B cell (primary cell): ENCODE measurements at regions of chr9 and their contacts with region 1.

Region 1: DNA sequence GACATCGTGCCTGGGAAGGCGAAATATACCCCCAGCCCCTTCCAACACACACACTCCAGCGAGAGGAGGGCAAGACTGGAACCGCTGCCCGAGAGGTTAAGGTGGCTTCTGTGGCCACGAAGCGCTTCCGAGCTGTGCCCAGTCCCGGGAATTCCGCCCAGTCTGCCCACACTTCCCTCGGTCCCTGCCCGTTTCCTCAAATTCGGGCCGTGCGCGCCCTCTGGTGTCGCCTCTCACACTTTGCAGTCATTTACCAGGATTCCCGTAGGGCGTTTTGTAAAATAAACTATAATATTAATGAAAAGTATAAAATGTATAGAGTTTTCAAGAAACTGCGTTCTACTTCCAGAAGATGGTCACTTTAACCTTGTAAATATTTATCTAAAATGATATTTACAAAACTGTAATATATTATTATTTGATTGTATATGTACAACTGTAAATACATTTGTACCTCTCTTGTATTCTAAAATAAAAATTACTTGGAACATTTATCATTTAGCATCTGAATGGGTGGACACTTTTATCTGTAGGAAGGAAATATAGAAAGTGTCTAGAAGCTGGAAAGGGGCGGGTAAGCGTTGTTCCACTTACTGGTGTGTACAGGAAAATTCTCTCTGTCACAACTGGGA is 11.0 kb upstream of the EXOSC2 start:
- DNase-seq: peak; percentile 74
- ATAC-seq: peak; percentile 41
- H3K4me3 ChIP-seq: peak overlapping the region; percentile 11 to 71 (median 61)
- H3K4me3 Mint-ChIP-seq: peak overlapping the region; percentile 97
- H3K27ac ChIP-seq: no peak overlapping the region
- H3K27ac Mint-ChIP-seq: peak overlapping the region; percentile 53
- H3K4me1 ChIP-seq: peaks cover 12% of the 10 kb centered on the region in 2 donors
- H3K4me1 Mint-ChIP-seq: peaks cover 8% of the 10 kb centered on the region
- H3K27me3 ChIP-seq: peaks cover 0 to 36% (median 4%) of the 10 kb centered on the region in 4 experiments
- H3K27me3 Mint-ChIP-seq: peaks cover 10% of the 10 kb centered on the region
- CTCF ChIP-seq: peak; percentile 89

Region 2: DNA sequence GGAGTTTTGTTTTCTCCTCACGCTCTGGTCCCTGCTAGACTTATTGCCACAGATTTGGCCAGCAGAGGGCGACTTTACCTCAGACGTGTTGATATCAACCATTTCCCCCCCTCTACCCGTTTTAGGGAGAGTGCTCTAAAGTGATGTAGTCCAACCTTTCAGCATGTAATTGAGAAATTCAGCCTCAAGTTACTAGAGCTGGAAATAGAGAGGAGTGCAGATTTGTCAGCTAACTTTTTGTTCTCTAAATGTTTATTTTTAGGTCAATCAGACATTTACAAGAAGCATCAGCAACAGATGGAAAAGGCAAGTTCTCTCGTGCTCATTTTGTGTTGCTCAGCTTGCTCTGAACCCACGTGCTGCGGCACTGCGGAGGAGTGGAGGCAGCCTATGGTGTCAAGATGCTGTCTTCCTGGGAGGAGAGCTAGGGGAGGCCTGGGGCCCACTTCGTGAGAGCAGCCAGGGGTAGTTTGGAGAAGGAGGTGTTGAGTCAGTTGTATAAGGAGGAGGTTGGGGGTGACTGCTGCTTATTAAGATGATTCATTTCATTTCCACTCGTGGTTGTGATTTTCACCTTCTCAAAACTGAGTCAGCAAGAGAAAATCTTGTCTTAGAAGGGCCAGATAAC is 575.3 kb before region 1 on chr9:
- CTCF ChIA-PET with region 1: interaction called, 3 read pairs
- POLR2A ChIA-PET with region 1: no interaction called
- intact Hi-C with region 1: loop called (anchors 10 kb)
- DNase-seq: peak; percentile 85
- ATAC-seq: peak; percentile 80
- H3K4me3 ChIP-seq: no peak overlapping the region
- H3K4me3 Mint-ChIP-seq: no peak overlapping the region
- H3K27ac ChIP-seq: no peak overlapping the region
- H3K27ac Mint-ChIP-seq: peak overlapping the region; percentile 42
- H3K4me1 ChIP-seq: no peaks in the 10 kb centered on the region
- H3K4me1 Mint-ChIP-seq: peaks cover 11% of the 10 kb centered on the region
- H3K27me3 ChIP-seq: no peaks in the 10 kb centered on the region
- H3K27me3 Mint-ChIP-seq: no peaks in the 10 kb centered on the region
- CTCF ChIP-seq: peak; percentile 89

Region 3: DNA sequence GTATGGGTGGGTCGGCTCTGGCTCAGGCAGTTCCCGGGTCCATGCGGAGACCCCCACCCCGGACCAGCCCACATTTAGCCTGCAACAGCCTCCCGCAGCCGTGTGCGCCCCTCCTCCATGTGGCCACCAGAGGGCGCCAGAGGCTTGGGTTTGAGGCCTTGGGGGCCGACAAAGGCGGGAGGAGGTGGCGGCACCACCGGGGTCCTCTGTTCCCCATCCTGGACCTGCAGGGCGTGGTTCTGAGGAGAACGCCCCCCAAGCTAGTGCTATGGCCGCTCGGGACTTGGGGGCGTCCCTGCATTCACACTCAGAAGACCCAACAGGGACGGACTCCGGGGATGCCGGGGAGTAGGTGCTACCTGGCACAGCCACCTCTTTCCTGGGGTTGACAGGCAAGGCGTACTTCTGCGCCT is 221.4 kb before region 1 on chr9:
- CTCF ChIA-PET with region 1: interaction called, 43 read pairs
- POLR2A ChIA-PET with region 1: no interaction called
- intact Hi-C with region 1: no loop called
- DNase-seq: peak; percentile 75
- ATAC-seq: peak; percentile 75
- H3K4me3 ChIP-seq: no peak overlapping the region
- H3K4me3 Mint-ChIP-seq: no peak overlapping the region
- H3K27ac ChIP-seq: no peak overlapping the region
- H3K27ac Mint-ChIP-seq: no peak overlapping the region
- H3K4me1 ChIP-seq: peaks cover 0 to 3% of the 10 kb centered on the region in 2 donors
- H3K4me1 Mint-ChIP-seq: no peaks in the 10 kb centered on the region
- H3K27me3 ChIP-seq: peaks cover 0 to 19% (median 5%) of the 10 kb centered on the region in 4 experiments
- H3K27me3 Mint-ChIP-seq: peaks cover 15% of the 10 kb centered on the region
- CTCF ChIP-seq: peak; percentile 91

Region 4: GRCh38 chr9:130578865-130579737 is 103.5 kb before region 1 on chr9 and contains the start of gene FUBP3:
- CTCF ChIA-PET with region 1: no interaction called
- POLR2A ChIA-PET with region 1: no interaction called
- intact Hi-C with region 1: loop called (anchors 2 kb)
- DNase-seq: peak; percentile 90
- ATAC-seq: peak; percentile 87
- H3K4me3 ChIP-seq: peak within 1 kb of the TSS; percentile 72 to 92 (median 85)
- H3K4me3 Mint-ChIP-seq: peak within 1 kb of the TSS; percentile 95
- H3K27ac ChIP-seq: peak within 1 kb of the TSS; percentile 63 to 84
- H3K27ac Mint-ChIP-seq: peak within 1 kb of the TSS; percentile 89
- H3K4me1 ChIP-seq: peaks cover 19 to 20% of the 10 kb centered on the region in 2 donors
- H3K4me1 Mint-ChIP-seq: peaks cover 38% of the 10 kb centered on the region
- H3K27me3 ChIP-seq: no peaks in the 10 kb centered on the region
- H3K27me3 Mint-ChIP-seq: no peaks in the 10 kb centered on the region
- CTCF ChIP-seq: no peak
- total RNA-seq, gene FUBP3: 45.7 and 51.4 TPM in 2 replicates

Region 5: DNA sequence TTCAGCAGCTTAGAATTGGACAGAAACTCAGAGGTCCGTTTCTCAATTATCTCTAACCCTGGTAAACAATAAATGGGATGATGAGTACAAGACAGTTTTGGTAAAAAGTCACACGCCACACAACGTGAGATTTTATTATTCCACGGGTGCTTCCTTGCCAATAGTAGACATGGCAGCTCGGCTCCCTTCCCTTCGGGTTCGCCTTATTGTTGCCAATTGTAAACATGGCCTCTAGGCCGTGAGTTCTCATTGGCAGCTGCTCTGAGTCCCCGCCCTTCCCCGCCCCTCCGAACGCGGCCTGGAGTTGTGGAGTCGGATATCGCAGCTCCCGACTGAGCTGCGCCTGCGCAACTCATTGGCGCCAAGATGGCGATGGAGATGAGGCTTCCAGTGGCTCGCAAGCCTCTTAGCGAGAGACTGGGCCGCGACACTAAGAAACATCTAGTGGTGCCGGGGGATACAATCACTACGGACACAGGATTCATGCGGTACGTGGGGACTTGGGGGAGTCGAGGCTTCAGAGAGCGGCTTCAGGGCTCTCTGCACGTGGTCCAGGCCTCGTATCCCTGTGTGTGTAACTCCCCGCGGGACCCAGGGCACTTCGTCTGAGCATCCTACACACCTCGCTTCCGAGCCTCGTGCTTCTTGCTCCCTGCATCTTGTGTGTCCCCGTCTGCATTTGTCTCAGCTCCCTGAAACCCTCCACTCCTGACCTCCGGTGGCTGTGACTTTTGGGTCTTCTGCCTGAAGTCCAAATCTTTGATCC is 11.0 kb after region 1 on chr9 and contains the start of gene EXOSC2:
- CTCF ChIA-PET with region 1: interaction called, 33 read pairs
- POLR2A ChIA-PET with region 1: interaction called, 4 read pairs
- intact Hi-C with region 1: loop called (anchors 1 kb)
- DNase-seq: peak; percentile 97
- ATAC-seq: peak; percentile 100
- H3K4me3 ChIP-seq: peak within 1 kb of the TSS; percentile 70 to 97 (median 74)
- H3K4me3 Mint-ChIP-seq: peak within 1 kb of the TSS; percentile 98
- H3K27ac ChIP-seq: peak within 1 kb of the TSS; percentile 8 to 68
- H3K27ac Mint-ChIP-seq: peak within 1 kb of the TSS; percentile 95
- H3K4me1 ChIP-seq: peaks cover 18 to 19% of the 10 kb centered on the region in 2 donors
- H3K4me1 Mint-ChIP-seq: peaks cover 40% of the 10 kb centered on the region
- H3K27me3 ChIP-seq: no peaks in the 10 kb centered on the region
- H3K27me3 Mint-ChIP-seq: no peaks in the 10 kb centered on the region
- CTCF ChIP-seq: no peak
- total RNA-seq, gene EXOSC2: 53.3 and 55.5 TPM in 2 replicates

Region 6: GRCh38 chr9:130701056-130702022 is 18.7 kb after region 1 on chr9:
- CTCF ChIA-PET with region 1: interaction called, 21 read pairs
- POLR2A ChIA-PET with region 1: interaction called, 3 read pairs
- intact Hi-C with region 1: no loop called
- DNase-seq: peak; percentile 73
- ATAC-seq: peak; percentile 67
- H3K4me3 ChIP-seq: no peak overlapping the region
- H3K4me3 Mint-ChIP-seq: no peak overlapping the region
- H3K27ac ChIP-seq: no peak overlapping the region
- H3K27ac Mint-ChIP-seq: no peak overlapping the region
- H3K4me1 ChIP-seq: no peaks in the 10 kb centered on the region
- H3K4me1 Mint-ChIP-seq: peaks cover 15% of the 10 kb centered on the region
- H3K27me3 ChIP-seq: no peaks in the 10 kb centered on the region
- H3K27me3 Mint-ChIP-seq: no peaks in the 10 kb centered on the region
- CTCF ChIP-seq: peak; percentile 96

Region 7: DNA sequence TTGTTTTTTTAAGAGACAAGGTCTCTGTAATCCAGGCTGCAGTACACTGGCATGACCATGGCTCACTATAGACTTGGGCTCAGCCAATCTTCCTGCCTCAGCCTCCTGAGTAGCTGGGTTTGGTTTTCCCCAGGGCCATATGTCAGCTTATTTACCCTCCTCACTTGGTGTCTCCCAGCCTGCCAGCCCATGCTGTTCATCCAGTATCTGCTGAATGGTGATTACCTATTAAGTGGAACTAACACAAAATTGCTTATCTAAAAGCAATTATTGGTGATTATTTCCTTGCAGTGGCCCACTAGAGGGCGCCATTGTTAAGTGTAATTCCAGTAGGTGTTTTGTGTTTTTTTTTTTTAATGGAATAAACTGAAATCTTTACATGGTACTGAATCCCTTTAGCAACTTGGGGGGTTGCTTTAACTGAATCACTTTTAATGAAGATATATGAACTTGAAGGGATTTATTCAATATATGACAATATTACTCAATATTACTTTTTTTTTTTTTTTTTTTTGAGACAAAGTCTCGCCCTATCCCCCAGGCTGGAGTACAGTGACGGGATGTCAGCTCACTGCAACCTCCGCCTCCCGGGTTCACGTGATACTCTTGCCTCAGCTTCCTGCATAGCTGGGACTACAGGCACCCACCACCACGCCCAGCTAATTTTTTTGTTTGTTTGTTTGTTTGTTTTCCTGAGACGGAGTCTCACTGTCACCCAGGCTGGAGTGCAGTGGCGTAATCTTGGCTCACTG is 24.8 kb after region 1 on chr9:
- CTCF ChIA-PET with region 1: interaction called, 21 read pairs
- POLR2A ChIA-PET with region 1: no interaction called
- intact Hi-C with region 1: no loop called
- DNase-seq: peak; percentile 79
- ATAC-seq: no peak
- H3K4me3 ChIP-seq: no peak overlapping the region
- H3K4me3 Mint-ChIP-seq: no peak overlapping the region
- H3K27ac ChIP-seq: no peak overlapping the region
- H3K27ac Mint-ChIP-seq: no peak overlapping the region
- H3K4me1 ChIP-seq: peaks cover 0 to 5% of the 10 kb centered on the region in 2 donors
- H3K4me1 Mint-ChIP-seq: peaks cover 1% of the 10 kb centered on the region
- H3K27me3 ChIP-seq: no peaks in the 10 kb centered on the region
- H3K27me3 Mint-ChIP-seq: no peaks in the 10 kb centered on the region
- CTCF ChIP-seq: peak; percentile 85